ENCODE measurements at regions of chr10 and their contacts with region 1.

Region 1: DNA sequence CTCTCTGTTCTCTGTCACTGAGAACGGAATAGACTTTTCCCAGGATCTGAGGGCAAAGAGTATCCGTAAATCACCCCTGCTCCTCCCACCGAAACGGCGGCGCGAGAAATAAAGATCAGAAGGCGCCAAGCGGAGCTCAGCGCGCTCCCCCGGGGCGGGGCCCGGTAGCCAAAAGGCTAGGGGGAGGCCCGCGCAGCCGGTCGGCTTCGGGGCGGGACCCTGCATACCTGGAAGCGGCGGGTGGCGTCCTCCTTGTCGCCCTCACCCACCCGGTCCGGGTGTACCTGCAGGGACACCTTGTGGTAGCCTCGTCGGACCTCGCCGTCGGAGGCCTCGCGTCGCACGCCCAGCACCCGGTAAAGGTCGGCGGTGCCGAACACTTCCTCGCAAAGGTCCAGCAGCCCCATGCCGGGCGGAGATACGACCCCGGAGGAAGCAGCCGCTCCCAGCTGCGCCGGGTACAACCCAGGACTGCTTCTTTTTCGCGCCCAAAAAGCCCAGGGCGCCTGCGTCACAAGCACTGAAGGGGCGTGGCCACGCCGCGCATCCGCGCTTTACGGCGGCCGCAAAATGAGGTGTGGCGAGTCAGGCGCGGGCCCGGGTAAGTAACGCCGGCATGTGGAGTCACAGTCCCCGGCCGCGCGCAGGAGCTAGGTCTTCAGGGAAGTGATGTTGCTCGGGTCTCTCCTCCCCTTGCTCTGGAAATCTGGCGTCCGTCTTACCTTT is at the start of gene DNAJC9:
- DNase-seq: peak; percentile 93 to 97 (median 96)
- ATAC-seq: peak; percentile 89 to 91
- H3K4me3 Mint-ChIP-seq: peak within 1 kb of the TSS; percentile 91 to 98 (median 95)
- H3K27ac Mint-ChIP-seq: peak within 1 kb of the TSS; percentile 91 to 98 (median 96)
- H3K4me1 Mint-ChIP-seq: peaks cover 11 to 72% (median 51%) of the 10 kb centered on the region in 4 donors
- H3K27me3 Mint-ChIP-seq: no peaks in the 10 kb centered on the region
- polyA plus RNA-seq, gene DNAJC9: 27.5 to 28.7 (median 27.6) TPM

Region 2: DNA sequence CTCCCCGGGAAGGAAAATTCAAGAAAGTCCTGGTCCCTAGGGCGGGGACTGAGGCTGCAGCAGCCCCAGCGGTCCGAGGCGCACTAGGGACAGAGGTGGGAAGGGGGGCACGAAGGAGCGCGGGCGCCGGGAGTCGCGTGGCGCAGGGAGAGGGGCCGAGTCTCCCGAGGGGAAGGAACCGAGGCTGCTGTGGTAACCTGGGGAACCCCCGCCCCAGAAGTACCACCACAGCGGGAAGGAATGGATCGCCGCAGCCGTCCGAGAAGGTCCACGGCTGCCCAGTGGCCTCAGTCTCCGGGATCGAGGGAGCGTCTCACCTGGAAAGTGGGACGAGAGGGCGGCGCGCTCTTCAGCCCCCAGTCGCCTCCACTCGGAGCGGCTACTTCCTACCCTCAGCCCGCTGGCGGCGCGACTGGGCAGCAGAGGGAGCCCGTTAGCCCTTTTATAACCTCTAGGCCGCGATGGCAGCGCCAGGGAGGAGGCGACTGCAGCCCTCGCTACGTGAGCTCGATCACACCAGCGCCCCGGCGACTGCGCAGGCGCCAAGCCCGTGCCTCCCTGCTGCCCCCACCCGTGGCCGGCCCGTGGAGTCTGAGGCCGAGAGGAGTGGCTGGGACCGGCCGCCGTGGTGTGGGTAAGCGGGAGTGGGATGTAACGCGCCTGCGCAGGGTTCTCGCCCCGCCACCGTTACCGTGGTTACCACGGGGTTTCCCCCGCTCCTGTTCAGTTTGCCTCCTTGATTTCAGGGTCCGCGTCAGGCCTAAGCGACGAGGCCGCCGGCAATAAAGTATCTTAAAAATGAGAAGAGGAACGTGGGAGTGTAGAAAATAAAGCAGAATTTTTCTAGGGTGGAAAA is 150.3 kb before region 1 on chr10 and contains the start of gene P4HA1:
- POLR2A ChIA-PET with region 1: interaction called, 16 read pairs
- DNase-seq: peak; percentile 91 to 99 (median 96)
- ATAC-seq: peak; percentile 81 to 85
- H3K4me3 Mint-ChIP-seq: peak within 1 kb of the TSS; percentile 87 to 97 (median 92)
- H3K27ac Mint-ChIP-seq: peak within 1 kb of the TSS; percentile 78 to 97 (median 96)
- H3K4me1 Mint-ChIP-seq: peaks cover 15 to 34% (median 30%) of the 10 kb centered on the region in 4 donors
- H3K27me3 Mint-ChIP-seq: no peaks in the 10 kb centered on the region
- polyA plus RNA-seq, gene P4HA1: 14.2 to 17.6 (median 14.4) TPM

Region 3: GRCh38 chr10:73225518-73225917 is 21.4 kb before region 1 on chr10:
- POLR2A ChIA-PET with region 1: no interaction called
- DNase-seq: no peak
- ATAC-seq: no peak
- H3K4me3 Mint-ChIP-seq: no peak overlapping the region
- H3K27ac Mint-ChIP-seq: no peak overlapping the region
- H3K4me1 Mint-ChIP-seq: no peaks in the 10 kb centered on the region
- H3K27me3 Mint-ChIP-seq: no peaks in the 10 kb centered on the region

Region 4: DNA sequence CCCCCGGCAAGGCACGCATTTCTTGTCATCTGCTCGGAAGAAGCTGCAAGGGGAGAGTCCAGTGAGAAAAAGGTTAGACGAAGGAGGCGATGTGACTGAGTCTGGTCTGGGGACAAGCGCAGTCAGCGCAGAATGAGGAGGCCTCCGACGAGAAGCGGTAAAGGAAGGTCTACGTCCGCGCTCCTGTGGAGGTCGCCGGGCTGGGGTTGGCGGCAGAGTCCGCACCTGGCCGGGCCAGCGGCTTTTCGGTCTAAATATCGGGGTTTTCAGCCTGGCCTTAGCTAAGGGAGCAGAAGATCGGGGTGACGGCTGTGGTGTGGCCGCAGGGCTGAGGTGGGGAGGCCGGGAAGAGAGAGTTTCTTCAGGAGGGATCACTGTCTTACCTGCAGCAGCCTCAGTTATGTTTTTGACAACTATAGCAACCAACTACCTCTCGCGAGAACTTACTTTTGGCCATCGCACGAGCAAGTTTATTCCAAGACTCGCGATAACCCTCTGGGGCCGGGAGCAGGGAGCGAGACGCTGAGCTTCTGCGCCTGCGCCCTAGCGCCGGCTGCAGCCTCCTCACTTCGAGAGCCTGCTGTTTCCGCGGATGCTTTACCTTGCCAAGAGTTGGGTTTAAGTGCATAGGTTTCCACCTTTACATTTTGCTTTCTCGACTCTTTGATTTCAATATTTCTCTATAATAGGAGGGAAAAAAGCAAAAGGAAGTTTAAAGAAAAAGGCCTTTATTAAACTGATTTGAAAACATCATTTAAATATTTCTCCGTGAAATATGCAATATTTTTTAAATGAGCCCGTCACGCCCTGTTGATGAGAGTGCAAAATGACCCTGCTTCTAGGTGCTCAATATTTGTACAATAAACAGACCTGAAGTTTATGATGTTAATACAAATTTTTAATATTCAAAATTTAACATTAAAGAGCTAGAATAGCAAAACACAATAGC is 111.7 kb after region 1 on chr10 and contains the start of gene CFAP70:
- POLR2A ChIA-PET with region 1: interaction called, 11 read pairs
- DNase-seq: peak; percentile 90 to 97 (median 93)
- ATAC-seq: peak; percentile 93 to 94
- H3K4me3 Mint-ChIP-seq: peak within 1 kb of the TSS; percentile 93 to 100 (median 98)
- H3K27ac Mint-ChIP-seq: peak within 1 kb of the TSS; percentile 91 to 100 (median 99)
- H3K4me1 Mint-ChIP-seq: peaks cover 10 to 17% (median 15%) of the 10 kb centered on the region in 4 donors
- H3K27me3 Mint-ChIP-seq: peaks cover 0 to 3% (median 0%) of the 10 kb centered on the region in 5 donors
- polyA plus RNA-seq, gene CFAP70: 0.31 to 0.50 (median 0.39) TPM

Region 5: GRCh38 chr10:73413528-73414229 is 166.7 kb after region 1 on chr10 and contains the start of gene ANXA7:
- POLR2A ChIA-PET with region 1: interaction called, 11 read pairs
- DNase-seq: peak; percentile 82 to 95 (median 89)
- ATAC-seq: peak; percentile 94 to 96
- H3K4me3 Mint-ChIP-seq: peak within 1 kb of the TSS; percentile 89 to 99 (median 94)
- H3K27ac Mint-ChIP-seq: peak within 1 kb of the TSS; percentile 84 to 96 (median 93)
- H3K4me1 Mint-ChIP-seq: peaks cover 27 to 59% (median 56%) of the 10 kb centered on the region in 4 donors
- H3K27me3 Mint-ChIP-seq: peaks cover 0 to 2% (median 0%) of the 10 kb centered on the region in 5 donors
- polyA plus RNA-seq, gene ANXA7: 168 to 193 (median 179) TPM

Region 6: GRCh38 chr10:73495884-73496674 is 249.1 kb after region 1 on chr10 and contains the start of gene PPP3CB:
- POLR2A ChIA-PET with region 1: interaction called, 10 read pairs
- DNase-seq: peak in 9 of 10 donors; percentile 78 to 96 (median 86)
- ATAC-seq: peak; percentile 82 to 84
- H3K4me3 Mint-ChIP-seq: peak within 1 kb of the TSS; percentile 82 to 98 (median 95)
- H3K27ac Mint-ChIP-seq: peak within 1 kb of the TSS; percentile 89 to 98 (median 95)
- H3K4me1 Mint-ChIP-seq: peaks cover 26 to 54% (median 51%) of the 10 kb centered on the region in 4 donors
- H3K27me3 Mint-ChIP-seq: no peaks in the 10 kb centered on the region
- polyA plus RNA-seq, gene PPP3CB: 5.0 to 5.8 (median 5.8) TPM

Measured in naive thymus-derived CD8-positive, alpha-beta T cell (primary cell).